ENCODE measurements at regions of chr12 and their contacts with region 1.

Region 1: DNA sequence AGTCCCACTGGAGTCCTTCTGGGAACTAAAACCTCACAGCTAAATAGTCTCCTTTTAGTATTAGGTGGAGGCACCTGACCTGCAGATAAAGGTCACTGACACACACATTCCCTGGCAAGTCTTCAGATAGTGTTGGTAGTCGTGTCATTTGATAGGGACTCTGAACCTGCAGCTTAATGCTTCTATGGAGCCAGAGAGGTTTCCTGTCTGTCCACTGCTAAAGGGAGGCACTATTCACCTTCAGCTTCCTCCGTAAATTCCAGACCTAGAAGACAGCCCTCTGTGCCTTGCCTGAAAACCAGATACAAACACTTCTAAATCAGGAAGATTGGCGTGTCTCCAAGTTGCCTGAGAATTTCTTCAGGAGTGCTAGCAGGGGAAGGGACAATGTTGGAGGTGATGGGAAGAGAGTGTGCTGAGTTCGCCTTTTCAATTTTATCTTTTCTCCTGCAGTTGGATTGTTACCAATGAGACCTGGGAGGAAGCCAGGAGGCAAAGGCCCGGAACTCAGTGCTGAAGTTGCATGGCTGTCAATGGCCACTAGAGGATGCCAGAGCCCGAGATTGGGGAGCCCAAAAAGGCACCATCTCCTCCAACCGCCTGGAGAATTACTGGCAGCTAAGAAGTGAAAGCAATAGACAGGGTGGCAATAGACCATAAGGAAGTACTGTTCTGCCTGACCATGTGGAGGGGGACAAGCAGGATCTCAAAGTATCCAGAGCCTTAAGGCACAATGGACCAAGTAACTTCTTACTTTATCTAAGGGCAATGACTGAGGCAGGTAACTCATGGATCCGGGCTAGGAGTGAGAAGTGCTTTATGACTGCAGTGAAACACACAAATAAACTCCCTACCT is 81.6 kb upstream of the SCAF11 start:
- DNase-seq: peak; percentile 84
- ATAC-seq: peak; percentile 83
- H3K4me3 ChIP-seq: no peak overlapping the region
- H3K27ac ChIP-seq: no peak overlapping the region
- H3K4me1 ChIP-seq: 0 out of 2 replicates have a peak, but pooled peaks cover 5% of the 10 kb centered on the region
- H3K27me3 ChIP-seq: no peaks in the 10 kb centered on the region
- CTCF ChIP-seq: peak; percentile 96

Region 2: DNA sequence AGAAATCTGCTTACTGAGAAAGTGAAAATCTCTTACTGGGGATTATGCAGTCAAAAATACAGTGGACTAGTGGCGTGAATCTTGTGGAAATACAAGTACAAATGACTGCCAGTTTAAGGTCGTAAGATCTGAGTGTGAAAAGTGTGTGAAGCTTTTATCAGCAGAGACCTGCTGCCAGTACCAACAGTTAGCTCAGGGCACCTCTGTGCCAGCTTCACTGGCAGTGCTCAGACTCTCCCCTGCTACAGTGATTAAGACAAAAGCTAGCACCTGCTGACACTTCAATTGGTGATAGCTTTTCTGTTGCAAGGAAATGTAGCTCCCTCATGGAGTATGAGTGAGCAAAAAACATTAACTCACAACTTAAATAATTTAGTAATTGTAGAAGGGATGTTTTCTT is 671.0 kb before region 1 on chr12:
- CTCF ChIA-PET with region 1: no interaction called
- POLR2A ChIA-PET with region 1: no interaction called
- intact Hi-C with region 1: no loop called
- DNase-seq: no peak
- ATAC-seq: no peak
- H3K4me3 ChIP-seq: no peak overlapping the region
- H3K27ac ChIP-seq: no peak overlapping the region
- H3K4me1 ChIP-seq: no peaks in the 10 kb centered on the region
- H3K27me3 ChIP-seq: no peaks in the 10 kb centered on the region
- CTCF ChIP-seq: no peak

Region 3: DNA sequence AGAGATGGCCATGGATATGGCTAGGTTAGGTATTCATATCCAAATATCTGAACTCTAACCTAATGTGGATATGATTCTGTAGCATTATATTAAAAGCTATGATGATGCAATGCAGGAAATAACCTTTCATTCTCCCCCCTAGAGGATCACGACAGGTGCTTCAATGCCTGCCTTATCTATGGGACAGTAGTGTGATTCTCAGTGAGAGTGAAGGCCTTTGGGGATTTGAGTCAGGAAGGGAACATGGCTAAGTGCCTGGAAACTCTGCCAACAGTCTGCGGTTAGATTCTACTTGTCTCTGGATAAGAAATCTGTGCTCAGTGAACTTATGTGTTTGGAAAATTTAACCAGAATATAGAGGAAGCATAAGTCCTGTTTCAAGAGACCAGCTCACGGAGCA is 115.0 kb after region 1 on chr12:
- CTCF ChIA-PET with region 1: no interaction called
- POLR2A ChIA-PET with region 1: no interaction called
- intact Hi-C with region 1: loop called (anchors 10 kb)
- DNase-seq: peak; percentile 71
- ATAC-seq: peak; percentile 42
- H3K4me3 ChIP-seq: no peak overlapping the region
- H3K27ac ChIP-seq: no peak overlapping the region
- H3K4me1 ChIP-seq: no peaks in the 10 kb centered on the region
- H3K27me3 ChIP-seq: no peaks in the 10 kb centered on the region
- CTCF ChIP-seq: no peak

Region 4: GRCh38 chr12:46357438-46358324 is 285.7 kb after region 1 on chr12:
- CTCF ChIA-PET with region 1: no interaction called
- POLR2A ChIA-PET with region 1: no interaction called
- intact Hi-C with region 1: loop called (anchors 2 kb)
- DNase-seq: peak; percentile 39
- ATAC-seq: peak; percentile 46
- H3K4me3 ChIP-seq: no peak overlapping the region
- H3K27ac ChIP-seq: no peak overlapping the region
- H3K4me1 ChIP-seq: no peaks in the 10 kb centered on the region
- H3K27me3 ChIP-seq: no peaks in the 10 kb centered on the region
- CTCF ChIP-seq: no peak

Region 5: GRCh38 chr12:47758834-47759690 is 1687.1 kb after region 1 on chr12 and contains the start of gene RAPGEF3:
- CTCF ChIA-PET with region 1: interaction called, 13 read pairs
- POLR2A ChIA-PET with region 1: no interaction called
- intact Hi-C with region 1: no loop called
- DNase-seq: peak; percentile 87
- ATAC-seq: peak; percentile 85
- H3K4me3 ChIP-seq: peak within 1 kb of the TSS; percentile 75
- H3K27ac ChIP-seq: peak within 1 kb of the TSS; percentile 68
- H3K4me1 ChIP-seq: peaks cover 42% of the 10 kb centered on the region
- H3K27me3 ChIP-seq: no peaks in the 10 kb centered on the region
- CTCF ChIP-seq: peak; percentile 45
- total RNA-seq, gene RAPGEF3: 6.7 and 9.3 TPM in 2 replicates

Measured in PC-3 (cell line).